B cell (primary cell): ENCODE measurements at regions of chr9 and their contacts with region 1.

Region 1: GRCh38 chr9:129131300-129132145 is 20.3 kb downstream of the PTPA start:
- DNase-seq: peak; percentile 85
- ATAC-seq: peak; percentile 99
- H3K4me3 ChIP-seq: no peak overlapping the region
- H3K4me3 Mint-ChIP-seq: no peak overlapping the region
- H3K27ac ChIP-seq: no peak overlapping the region
- H3K27ac Mint-ChIP-seq: peak overlapping the region; percentile 20
- H3K4me1 ChIP-seq: peaks cover 4 to 8% of the 10 kb centered on the region in 2 donors
- H3K4me1 Mint-ChIP-seq: peaks cover 5% of the 10 kb centered on the region
- H3K27me3 ChIP-seq: no peaks in the 10 kb centered on the region
- H3K27me3 Mint-ChIP-seq: no peaks in the 10 kb centered on the region
- CTCF ChIP-seq: peak; percentile 97

Region 2: DNA sequence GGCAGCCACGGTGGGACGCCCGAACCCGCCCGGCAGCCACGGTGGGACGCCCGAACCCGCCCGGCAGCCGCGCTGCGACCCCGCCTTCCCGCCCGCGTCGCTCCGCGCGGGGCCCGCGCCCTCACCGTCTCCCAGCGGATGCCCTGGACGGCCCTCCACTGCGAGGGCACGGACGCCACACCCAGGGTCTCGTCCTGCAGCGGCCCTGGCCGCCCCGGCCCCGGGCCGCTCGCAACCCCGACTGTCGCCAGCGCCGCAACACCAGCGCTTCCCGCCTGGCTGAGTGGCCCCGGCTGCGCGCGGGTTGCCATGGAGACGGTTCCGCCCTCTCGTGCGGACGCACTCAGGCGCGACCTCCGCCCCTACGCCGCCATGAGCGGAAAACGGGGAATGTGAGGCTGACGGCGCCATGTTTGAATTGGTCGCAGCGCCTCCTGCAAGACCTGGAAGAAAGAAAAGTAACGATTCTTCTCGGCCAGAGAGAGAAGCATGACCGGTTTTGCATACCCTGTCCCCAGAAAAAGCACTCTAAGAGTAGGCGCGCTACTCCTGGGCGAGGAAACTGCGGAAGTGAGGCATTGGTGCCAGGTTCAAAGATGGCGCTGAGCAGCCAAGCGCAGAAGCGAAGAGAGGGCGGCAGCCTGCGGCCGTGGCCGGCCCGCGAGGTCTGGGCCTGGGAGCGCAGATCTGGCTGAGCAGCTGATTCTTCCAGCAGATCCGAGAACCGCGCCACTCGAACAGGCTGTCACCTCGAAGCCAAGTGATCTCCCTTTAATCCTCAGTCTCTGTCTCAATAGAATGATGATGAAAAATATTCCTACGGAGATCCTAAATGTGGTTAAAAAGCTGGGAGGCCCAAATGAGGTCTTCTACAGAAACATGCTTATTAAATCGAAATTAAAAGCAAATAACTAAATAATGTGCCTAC is 474.8 kb before region 1 on chr9 and contains the start of gene DYNC2I2:
- CTCF ChIA-PET with region 1: no interaction called
- POLR2A ChIA-PET with region 1: no interaction called
- intact Hi-C with region 1: no loop called
- DNase-seq: peak; percentile 90
- ATAC-seq: peak; percentile 80
- H3K4me3 ChIP-seq: peak within 1 kb of the TSS; percentile 66 to 97 (median 89)
- H3K4me3 Mint-ChIP-seq: peak within 1 kb of the TSS; percentile 96
- H3K27ac ChIP-seq: peak within 1 kb of the TSS; percentile 92 to 95
- H3K27ac Mint-ChIP-seq: peak within 1 kb of the TSS; percentile 100
- H3K4me1 ChIP-seq: peaks cover 2 to 14% of the 10 kb centered on the region in 2 donors
- H3K4me1 Mint-ChIP-seq: peaks cover 13% of the 10 kb centered on the region
- H3K27me3 ChIP-seq: no peaks in the 10 kb centered on the region
- H3K27me3 Mint-ChIP-seq: no peaks in the 10 kb centered on the region
- CTCF ChIP-seq: no peak
- total RNA-seq, gene DYNC2I2: 76.6 and 83.4 TPM in 2 replicates

Region 3: DNA sequence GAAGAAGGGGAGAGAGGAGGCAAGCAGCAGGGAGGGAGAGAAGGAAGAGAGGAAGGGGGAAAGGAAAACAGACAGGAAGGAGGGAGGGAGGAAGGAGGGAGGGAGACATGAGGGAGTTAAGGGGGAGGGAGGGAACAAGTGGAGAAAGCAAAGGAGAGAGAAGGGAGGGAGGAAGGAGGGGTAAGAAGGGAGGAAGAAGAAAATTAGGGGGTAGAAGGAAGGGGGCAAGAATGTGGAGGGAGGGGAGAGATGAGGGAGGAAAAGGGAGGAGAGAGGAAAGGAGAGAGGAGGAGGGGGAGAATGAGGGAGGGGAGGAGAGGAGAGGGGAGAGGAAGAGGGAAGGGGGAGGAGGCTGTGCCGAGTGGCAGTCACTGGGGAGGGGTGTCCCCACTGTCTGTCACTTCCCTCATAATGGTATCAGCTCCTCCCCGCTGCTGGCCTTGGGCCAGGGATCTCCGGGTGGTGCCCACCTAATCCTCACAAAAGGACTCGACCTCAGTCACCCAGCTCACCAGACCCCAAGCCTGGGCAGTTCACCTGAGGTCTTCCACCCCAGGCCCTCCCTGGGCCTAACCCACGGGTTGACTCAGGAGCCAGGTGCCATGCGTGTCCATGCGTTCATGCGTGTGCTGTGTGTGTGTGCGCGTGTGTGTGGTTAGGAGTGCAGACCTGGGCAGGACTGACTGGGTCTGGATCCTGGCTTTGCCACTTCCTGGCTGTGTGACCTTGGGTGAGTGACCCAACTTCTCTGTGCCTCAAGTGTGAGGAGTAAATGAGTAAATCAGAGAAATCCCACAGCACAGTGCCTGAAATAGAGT is 471.3 kb after region 1 on chr9:
- CTCF ChIA-PET with region 1: interaction called, 55 read pairs
- POLR2A ChIA-PET with region 1: no interaction called
- intact Hi-C with region 1: no loop called
- DNase-seq: peak; percentile 19
- ATAC-seq: no peak
- H3K4me3 ChIP-seq: no peak overlapping the region
- H3K4me3 Mint-ChIP-seq: no peak overlapping the region
- H3K27ac ChIP-seq: no peak overlapping the region
- H3K27ac Mint-ChIP-seq: no peak overlapping the region
- H3K4me1 ChIP-seq: peaks cover 13% of the 10 kb centered on the region in 2 donors
- H3K4me1 Mint-ChIP-seq: peaks cover 18% of the 10 kb centered on the region
- H3K27me3 ChIP-seq: peaks cover 0 to 16% (median 5%) of the 10 kb centered on the region in 4 experiments
- H3K27me3 Mint-ChIP-seq: peaks cover 25% of the 10 kb centered on the region
- CTCF ChIP-seq: no peak

Region 4: DNA sequence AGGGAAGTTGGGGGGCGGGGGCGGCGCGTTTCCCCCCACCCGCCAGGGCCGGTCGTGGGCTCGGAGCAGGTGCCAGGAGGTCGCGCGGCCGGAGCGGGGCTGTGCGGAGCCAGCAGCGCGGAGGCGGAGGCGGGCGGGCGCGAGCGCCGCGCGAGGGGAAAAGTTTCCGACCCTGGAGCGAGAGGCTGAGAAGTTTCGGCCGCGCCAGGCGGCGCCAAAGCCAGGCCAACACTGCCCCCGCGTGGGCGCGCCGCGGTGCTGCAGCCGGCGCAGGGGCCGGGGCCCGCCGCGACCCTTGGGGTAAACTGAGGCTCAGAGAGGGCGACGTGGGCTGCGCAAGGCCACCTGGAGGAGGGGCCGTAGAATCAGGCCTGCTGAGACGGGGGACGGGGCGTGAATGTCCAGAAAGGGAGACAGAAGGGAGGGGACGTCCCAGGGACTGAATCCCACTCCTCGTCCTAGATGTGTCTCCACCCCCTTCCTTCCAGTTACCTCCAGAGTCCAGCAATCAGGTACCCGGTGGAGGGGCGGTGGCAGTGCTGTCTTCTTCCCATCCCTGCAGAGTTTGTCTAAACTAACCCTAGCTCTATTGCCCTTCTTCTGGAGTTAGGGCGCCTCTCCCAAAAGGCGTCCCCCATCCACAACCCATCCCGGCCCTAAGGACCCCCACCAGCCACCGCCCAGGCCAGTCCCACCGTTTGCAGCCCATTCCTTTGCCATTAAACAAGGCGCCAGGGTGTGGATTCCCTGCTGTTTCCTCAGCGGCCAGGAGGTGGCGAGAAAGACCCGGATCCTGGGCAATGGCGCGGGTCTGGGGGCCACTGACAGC is 479.2 kb after region 1 on chr9:
- CTCF ChIA-PET with region 1: interaction called, 55 read pairs
- POLR2A ChIA-PET with region 1: no interaction called
- intact Hi-C with region 1: loop called (anchors 1 kb)
- DNase-seq: peak; percentile 81
- ATAC-seq: peak; percentile 77
- H3K4me3 ChIP-seq: peak overlapping the region; percentile 21 to 86 (median 59)
- H3K4me3 Mint-ChIP-seq: peak overlapping the region; percentile 79
- H3K27ac ChIP-seq: peak overlapping the region in 1 of 2 donors; percentile 39
- H3K27ac Mint-ChIP-seq: peak overlapping the region; percentile 61
- H3K4me1 ChIP-seq: peaks cover 19 to 21% of the 10 kb centered on the region in 2 donors
- H3K4me1 Mint-ChIP-seq: peaks cover 22% of the 10 kb centered on the region
- H3K27me3 ChIP-seq: peaks cover 0 to 13% (median 0%) of the 10 kb centered on the region in 4 experiments
- H3K27me3 Mint-ChIP-seq: no peaks in the 10 kb centered on the region
- CTCF ChIP-seq: peak; percentile 94

Region 5: GRCh38 chr9:129783516-129784361 is 652.2 kb after region 1 on chr9:
- CTCF ChIA-PET with region 1: interaction called, 67 read pairs
- POLR2A ChIA-PET with region 1: no interaction called
- intact Hi-C with region 1: no loop called
- DNase-seq: peak; percentile 81
- ATAC-seq: peak; percentile 99
- H3K4me3 ChIP-seq: no peak overlapping the region
- H3K4me3 Mint-ChIP-seq: no peak overlapping the region
- H3K27ac ChIP-seq: no peak overlapping the region
- H3K27ac Mint-ChIP-seq: no peak overlapping the region
- H3K4me1 ChIP-seq: no peaks in the 10 kb centered on the region
- H3K4me1 Mint-ChIP-seq: no peaks in the 10 kb centered on the region
- H3K27me3 ChIP-seq: peaks cover 0 to 19% (median 1%) of the 10 kb centered on the region in 4 experiments
- H3K27me3 Mint-ChIP-seq: peaks cover 19% of the 10 kb centered on the region
- CTCF ChIP-seq: peak; percentile 89

Region 6: GRCh38 chr9:129796029-129796910 is 664.7 kb after region 1 on chr9:
- CTCF ChIA-PET with region 1: interaction called, 26 read pairs
- POLR2A ChIA-PET with region 1: no interaction called
- intact Hi-C with region 1: no loop called
- DNase-seq: no peak
- ATAC-seq: no peak
- H3K4me3 ChIP-seq: no peak overlapping the region
- H3K4me3 Mint-ChIP-seq: no peak overlapping the region
- H3K27ac ChIP-seq: no peak overlapping the region
- H3K27ac Mint-ChIP-seq: no peak overlapping the region
- H3K4me1 ChIP-seq: no peaks in the 10 kb centered on the region
- H3K4me1 Mint-ChIP-seq: no peaks in the 10 kb centered on the region
- H3K27me3 ChIP-seq: peaks cover 0 to 10% (median 0%) of the 10 kb centered on the region in 4 experiments
- H3K27me3 Mint-ChIP-seq: peaks cover 4% of the 10 kb centered on the region
- CTCF ChIP-seq: no peak

Region 7: DNA sequence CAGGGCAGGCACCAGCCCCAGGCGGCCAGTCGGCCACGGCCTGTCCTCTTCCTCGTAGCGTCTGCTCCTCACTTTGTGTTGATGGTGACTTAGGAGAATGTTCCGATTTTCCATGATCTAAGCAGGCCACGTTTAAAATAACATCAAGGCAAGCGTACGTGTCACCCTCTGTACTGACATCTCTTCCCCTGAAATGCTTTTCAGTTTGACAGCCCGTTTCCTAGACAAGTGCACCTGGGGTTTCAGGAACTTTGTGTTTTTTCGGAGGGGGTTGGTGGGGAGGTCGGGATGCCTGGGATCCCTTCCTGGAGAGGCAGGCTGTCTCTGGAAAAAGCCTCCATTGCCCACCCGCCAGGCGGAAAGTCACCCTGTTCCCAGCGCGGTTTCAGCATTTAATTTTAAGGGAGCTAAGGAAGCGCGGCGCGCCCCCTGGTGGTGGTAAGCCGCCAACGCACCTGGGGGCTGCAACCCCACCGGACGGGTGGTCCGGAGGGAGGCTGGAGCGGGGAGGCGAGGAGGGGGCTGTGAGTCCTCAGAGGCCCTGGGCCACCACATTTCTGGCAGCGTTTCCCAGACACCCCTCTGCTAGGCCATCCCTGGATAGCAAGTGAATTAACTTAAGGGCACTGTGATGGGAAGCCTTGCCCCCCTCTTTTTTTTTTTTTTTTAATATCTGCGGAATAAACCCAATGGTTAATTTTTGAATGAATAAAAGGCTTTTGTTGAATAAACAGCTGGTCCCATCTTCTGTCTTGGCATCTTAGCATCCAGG is 1104.6 kb after region 1 on chr9:
- CTCF ChIA-PET with region 1: no interaction called
- POLR2A ChIA-PET with region 1: no interaction called
- intact Hi-C with region 1: loop called (anchors 5 kb)
- DNase-seq: peak; percentile 79
- ATAC-seq: no peak
- H3K4me3 ChIP-seq: no peak overlapping the region
- H3K4me3 Mint-ChIP-seq: peak overlapping the region; percentile 23
- H3K27ac ChIP-seq: no peak overlapping the region
- H3K27ac Mint-ChIP-seq: peak overlapping the region; percentile 15
- H3K4me1 ChIP-seq: peaks cover 18 to 28% of the 10 kb centered on the region in 2 donors
- H3K4me1 Mint-ChIP-seq: peaks cover 28% of the 10 kb centered on the region
- H3K27me3 ChIP-seq: peaks cover 0 to 12% (median 0%) of the 10 kb centered on the region in 4 experiments
- H3K27me3 Mint-ChIP-seq: peaks cover 3% of the 10 kb centered on the region
- CTCF ChIP-seq: peak; percentile 97